ENCODE measurements at regions of chr15 and their contacts with region 1.

Region 1: GRCh38 chr15:75130597-75131268 is 70.9 kb upstream of the C15orf39 start:
- DNase-seq: no peak
- ATAC-seq: peak; percentile 83
- H3K4me3 ChIP-seq: peak overlapping the region; percentile 11
- H3K4me3 Mint-ChIP-seq: peak overlapping the region in 9 of 10 donors; percentile 30 to 85 (median 62)
- H3K27ac ChIP-seq: no peak overlapping the region
- H3K27ac Mint-ChIP-seq: peak overlapping the region in 3 of 9 donors; percentile 30 to 93 (median 66)
- H3K4me1 ChIP-seq: peaks cover 0 to 11% of the 10 kb centered on the region in 2 donors
- H3K4me1 Mint-ChIP-seq: peaks cover 6 to 39% (median 8%) of the 10 kb centered on the region in 7 donors
- H3K27me3 ChIP-seq: no peaks in the 10 kb centered on the region
- H3K27me3 Mint-ChIP-seq: peaks cover 0 to 14% (median 0%) of the 10 kb centered on the region in 5 donors

Region 2: GRCh38 chr15:75042730-75043508 is 87.8 kb before region 1 on chr15:
- CTCF ChIA-PET with region 1: no interaction called
- POLR2A ChIA-PET with region 1: no interaction called
- intact Hi-C with region 1: loop called in 1 of 2 experiments (anchors 5 kb)
- DNase-seq: peak in 3 of 9 donors; percentile 16 to 65 (median 45)
- ATAC-seq: peak; percentile 85
- H3K4me3 ChIP-seq: no peak overlapping the region
- H3K4me3 Mint-ChIP-seq: peak overlapping the region in 2 of 10 donors; percentile 48 to 79
- H3K27ac ChIP-seq: no peak overlapping the region
- H3K27ac Mint-ChIP-seq: peak overlapping the region in 2 of 9 donors; percentile 28 to 84
- H3K4me1 ChIP-seq: peaks cover 0 to 5% of the 10 kb centered on the region in 2 donors
- H3K4me1 Mint-ChIP-seq: peaks cover 0 to 86% (median 14%) of the 10 kb centered on the region in 7 donors
- H3K27me3 ChIP-seq: no peaks in the 10 kb centered on the region
- H3K27me3 Mint-ChIP-seq: no peaks in the 10 kb centered on the region

Region 3: DNA sequence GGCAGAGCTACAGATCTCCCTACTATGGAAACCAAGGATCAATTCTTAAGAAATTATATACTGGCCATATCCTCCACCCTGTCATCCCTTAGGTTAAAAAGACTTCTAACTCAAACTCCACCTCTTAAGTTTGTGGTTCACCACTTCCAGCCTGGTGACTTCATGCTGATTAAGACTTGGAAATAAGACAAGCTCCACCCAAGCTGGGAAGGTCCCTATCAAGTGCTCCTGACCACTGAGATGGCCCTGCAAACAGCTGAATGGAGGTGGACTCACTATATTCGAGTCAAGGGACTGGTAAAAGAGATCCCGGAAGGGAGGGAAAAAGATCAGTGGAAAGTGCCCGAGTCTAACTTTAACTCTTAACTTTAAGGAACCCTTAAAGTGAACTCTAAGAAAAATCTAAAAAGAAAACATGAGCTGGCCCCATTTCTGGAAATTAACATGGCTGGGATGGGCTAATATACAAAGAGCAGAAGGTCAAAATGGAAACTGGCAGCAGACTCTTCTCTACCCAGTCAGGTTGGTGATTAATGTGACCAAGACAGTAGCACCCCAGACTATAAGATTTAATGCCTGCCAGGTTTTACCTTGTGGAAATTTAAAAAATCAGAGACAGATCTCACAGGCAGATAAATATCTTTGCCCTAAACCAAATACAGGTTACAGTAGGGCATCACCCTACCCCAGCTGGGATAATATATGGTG is 63.5 kb before region 1 on chr15:
- CTCF ChIA-PET with region 1: no interaction called
- POLR2A ChIA-PET with region 1: no interaction called
- intact Hi-C with region 1: loop called in 1 of 2 experiments (anchors 1 kb)
- DNase-seq: peak in 2 of 9 donors; percentile 11 to 67
- ATAC-seq: peak; percentile 64
- H3K4me3 ChIP-seq: no peak overlapping the region
- H3K4me3 Mint-ChIP-seq: peak overlapping the region in 7 of 10 donors; percentile 0 to 85 (median 36)
- H3K27ac ChIP-seq: no peak overlapping the region
- H3K27ac Mint-ChIP-seq: peak overlapping the region in 2 of 9 donors; percentile 9 to 97
- H3K4me1 ChIP-seq: peaks cover 12 to 24% of the 10 kb centered on the region in 2 donors
- H3K4me1 Mint-ChIP-seq: peaks cover 19 to 88% (median 26%) of the 10 kb centered on the region in 7 donors
- H3K27me3 ChIP-seq: no peaks in the 10 kb centered on the region
- H3K27me3 Mint-ChIP-seq: peaks cover 0 to 10% (median 4%) of the 10 kb centered on the region in 5 donors

Region 4: DNA sequence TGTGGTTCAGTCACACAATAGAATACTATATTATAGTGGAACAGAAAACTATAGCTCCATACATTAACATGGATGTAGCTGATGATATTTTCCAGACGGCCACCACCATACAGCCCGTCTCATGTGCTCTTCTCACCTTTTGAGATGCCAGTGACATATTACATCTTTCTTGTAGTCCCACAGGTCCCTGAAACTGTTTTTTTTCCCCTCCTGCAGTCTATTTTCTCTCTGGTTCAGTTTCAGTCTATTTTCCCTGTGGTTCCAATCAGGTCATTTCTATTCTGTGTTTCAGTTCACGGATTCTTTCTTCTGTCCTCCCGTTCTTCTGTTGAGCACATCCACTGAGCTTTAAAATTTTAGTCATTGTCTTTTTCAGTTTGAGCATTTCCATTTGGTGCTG is 35.1 kb before region 1 on chr15:
- CTCF ChIA-PET with region 1: interaction called, 4 read pairs
- POLR2A ChIA-PET with region 1: no interaction called
- intact Hi-C with region 1: loop called in 1 of 2 experiments (anchors 5 kb)
- DNase-seq: no peak
- ATAC-seq: no peak
- H3K4me3 ChIP-seq: no peak overlapping the region
- H3K4me3 Mint-ChIP-seq: no peak overlapping the region
- H3K27ac ChIP-seq: no peak overlapping the region
- H3K27ac Mint-ChIP-seq: no peak overlapping the region
- H3K4me1 ChIP-seq: no peaks in the 10 kb centered on the region
- H3K4me1 Mint-ChIP-seq: peaks cover 0 to 11% (median 0%) of the 10 kb centered on the region in 7 donors
- H3K27me3 ChIP-seq: no peaks in the 10 kb centered on the region
- H3K27me3 Mint-ChIP-seq: peaks cover 0 to 8% (median 0%) of the 10 kb centered on the region in 5 donors

Region 5: DNA sequence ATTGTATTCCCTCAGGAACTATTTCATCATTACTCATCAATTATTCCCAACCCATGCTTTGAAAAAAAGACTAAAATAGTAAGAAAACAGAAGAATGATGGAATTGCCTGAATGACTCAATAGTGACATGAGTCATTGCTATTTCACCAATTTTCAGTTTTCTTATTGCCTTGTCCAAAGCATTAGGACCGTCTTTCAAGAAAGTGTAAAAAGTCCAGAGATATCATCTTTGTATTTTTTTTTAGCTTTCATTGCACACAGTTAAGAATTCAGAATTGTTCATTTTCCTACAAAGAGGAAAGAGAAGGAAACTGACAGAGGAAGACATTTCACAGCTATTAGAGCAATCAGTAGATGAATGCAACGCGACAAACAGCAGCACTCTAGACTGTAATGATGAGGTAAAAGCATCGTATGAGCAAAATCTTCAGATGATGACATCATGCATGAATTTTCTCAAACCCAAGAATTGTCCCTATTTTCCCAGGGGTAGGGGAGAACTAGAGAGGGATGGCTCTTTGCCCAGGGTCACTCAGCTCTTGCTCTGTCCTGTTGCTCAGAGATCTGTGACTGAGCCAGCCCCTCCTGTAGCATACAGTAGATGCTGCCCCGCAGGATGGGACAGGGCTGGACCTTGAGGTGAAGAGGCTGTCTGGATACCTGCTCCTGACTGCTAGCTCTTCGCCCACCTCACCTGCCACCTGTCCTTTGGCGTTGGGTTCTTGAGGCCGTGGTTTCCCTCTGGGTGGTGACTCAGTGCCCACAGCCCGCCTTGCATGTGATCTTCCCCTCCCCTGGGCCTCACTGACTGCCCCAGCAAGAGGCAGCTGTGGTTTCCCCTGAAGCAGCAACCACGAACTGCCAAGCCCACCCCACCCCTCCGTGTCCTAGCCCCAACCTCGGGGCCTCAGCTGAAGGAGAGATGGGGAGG is 22.6 kb before region 1 on chr15:
- CTCF ChIA-PET with region 1: no interaction called
- POLR2A ChIA-PET with region 1: no interaction called
- intact Hi-C with region 1: loop called in 1 of 2 experiments (anchors 2 kb)
- DNase-seq: peak in 2 of 9 donors; percentile 24 to 76
- ATAC-seq: peak; percentile 83
- H3K4me3 ChIP-seq: no peak overlapping the region
- H3K4me3 Mint-ChIP-seq: peak overlapping the region in 1 of 10 donors; percentile 69
- H3K27ac ChIP-seq: no peak overlapping the region
- H3K27ac Mint-ChIP-seq: peak overlapping the region in 1 of 9 donors; percentile 86
- H3K4me1 ChIP-seq: peaks cover 0 to 23% of the 10 kb centered on the region in 2 donors
- H3K4me1 Mint-ChIP-seq: peaks cover 0 to 56% (median 5%) of the 10 kb centered on the region in 7 donors
- H3K27me3 ChIP-seq: no peaks in the 10 kb centered on the region
- H3K27me3 Mint-ChIP-seq: peaks cover 6 to 31% (median 8%) of the 10 kb centered on the region in 5 donors